Activated CD4-positive, alpha-beta T cell treated with anti-CD3 and anti-CD28 coated beads for 36 hours (primary cell): ENCODE measurements at regions of chr16 and their contacts with region 1.

Region 1: GRCh38 chr16:48632137-48632774 is 22.3 kb upstream of the N4BP1 start:
- DNase-seq: no peak
- ATAC-seq: no peak
- H3K4me3 Mint-ChIP-seq: no peak overlapping the region
- H3K27ac Mint-ChIP-seq: no peak overlapping the region
- H3K4me1 Mint-ChIP-seq: peaks cover 8% of the 10 kb centered on the region
- H3K27me3 Mint-ChIP-seq: peaks cover 2% of the 10 kb centered on the region

Region 2: GRCh38 chr16:48231727-48232492 is 400.3 kb before region 1 on chr16:
- CTCF ChIA-PET with region 1: interaction called, 10 read pairs
- POLR2A ChIA-PET with region 1: no interaction called
- intact Hi-C with region 1: loop called (anchors 1 to 5 kb)
- DNase-seq: peak; percentile 72
- ATAC-seq: peak; percentile 83
- H3K4me3 Mint-ChIP-seq: peak overlapping the region; percentile 20
- H3K27ac Mint-ChIP-seq: peak overlapping the region; percentile 65
- H3K4me1 Mint-ChIP-seq: peaks cover 22% of the 10 kb centered on the region
- H3K27me3 Mint-ChIP-seq: peaks cover 5% of the 10 kb centered on the region

Region 3: DNA sequence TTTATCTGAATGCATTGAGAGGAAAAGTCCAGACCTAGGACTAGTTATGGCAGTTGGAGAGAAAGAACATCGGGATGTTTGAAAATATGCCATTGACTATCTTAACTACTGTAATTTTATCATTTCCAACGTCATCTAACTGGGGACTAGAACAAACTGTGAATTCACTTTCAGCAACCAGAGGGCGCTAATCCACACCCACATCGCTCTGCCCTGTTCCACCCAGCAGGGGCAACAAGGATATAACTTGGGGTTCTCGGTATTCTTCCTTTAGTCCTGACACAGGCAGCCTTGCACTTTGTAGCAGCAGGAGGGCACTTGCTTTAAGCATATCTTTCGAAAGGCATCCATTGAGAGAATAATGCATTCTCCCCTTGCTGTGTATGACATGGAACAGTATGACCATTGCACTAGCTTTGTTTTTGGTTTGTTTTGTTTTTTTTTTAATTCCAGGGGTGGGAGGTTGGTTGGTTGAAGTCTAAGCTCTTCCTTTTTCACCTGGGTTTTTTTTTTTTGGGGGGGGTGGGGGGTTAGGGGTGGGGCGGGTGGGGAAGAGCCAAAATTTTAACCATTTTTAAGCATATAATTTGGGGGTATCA is 278.6 kb before region 1 on chr16:
- CTCF ChIA-PET with region 1: interaction called, 45 read pairs
- POLR2A ChIA-PET with region 1: interaction called, 4 read pairs
- intact Hi-C with region 1: loop called (anchors 1 kb)
- DNase-seq: peak; percentile 78
- ATAC-seq: peak; percentile 83
- H3K4me3 Mint-ChIP-seq: no peak overlapping the region
- H3K27ac Mint-ChIP-seq: peak overlapping the region; percentile 51
- H3K4me1 Mint-ChIP-seq: peaks cover 25% of the 10 kb centered on the region
- H3K27me3 Mint-ChIP-seq: no peaks in the 10 kb centered on the region

Region 4: DNA sequence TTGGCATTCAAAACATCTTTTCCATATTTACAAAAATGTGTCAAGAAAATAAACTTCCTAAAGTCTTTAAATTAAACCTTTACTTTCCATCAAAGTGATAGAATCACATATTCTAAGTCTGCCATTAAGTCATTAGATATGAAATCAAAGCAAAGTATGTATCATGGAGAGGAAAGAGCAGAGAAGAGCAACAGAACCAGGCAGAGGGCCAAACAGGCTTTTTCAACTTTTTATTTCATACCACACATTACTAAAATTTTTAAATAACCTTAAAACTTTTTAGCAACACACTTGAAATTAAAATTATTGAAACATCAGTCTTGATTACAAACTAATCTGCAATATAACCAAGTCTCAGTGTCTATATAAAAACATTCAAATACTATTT is 260.9 kb before region 1 on chr16:
- CTCF ChIA-PET with region 1: interaction called, 13 read pairs
- POLR2A ChIA-PET with region 1: no interaction called
- intact Hi-C with region 1: loop called in 1 of 2 experiments (anchors 1 kb)
- DNase-seq: no peak
- ATAC-seq: no peak
- H3K4me3 Mint-ChIP-seq: no peak overlapping the region
- H3K27ac Mint-ChIP-seq: no peak overlapping the region
- H3K4me1 Mint-ChIP-seq: peaks cover 35% of the 10 kb centered on the region
- H3K27me3 Mint-ChIP-seq: no peaks in the 10 kb centered on the region

Region 5: GRCh38 chr16:48452977-48453760 is 179.1 kb before region 1 on chr16:
- CTCF ChIA-PET with region 1: interaction called, 8 read pairs
- POLR2A ChIA-PET with region 1: no interaction called
- intact Hi-C with region 1: loop called (anchors 1 to 5 kb)
- DNase-seq: no peak
- ATAC-seq: no peak
- H3K4me3 Mint-ChIP-seq: no peak overlapping the region
- H3K27ac Mint-ChIP-seq: no peak overlapping the region
- H3K4me1 Mint-ChIP-seq: peaks cover 2% of the 10 kb centered on the region
- H3K27me3 Mint-ChIP-seq: peaks cover 16% of the 10 kb centered on the region

Region 6: GRCh38 chr16:48526058-48526957 is 105.9 kb before region 1 on chr16:
- CTCF ChIA-PET with region 1: interaction called, 10 read pairs
- POLR2A ChIA-PET with region 1: no interaction called
- intact Hi-C with region 1: no loop called
- DNase-seq: peak; percentile 71
- ATAC-seq: peak; percentile 90
- H3K4me3 Mint-ChIP-seq: no peak overlapping the region
- H3K27ac Mint-ChIP-seq: no peak overlapping the region
- H3K4me1 Mint-ChIP-seq: no peaks in the 10 kb centered on the region
- H3K27me3 Mint-ChIP-seq: no peaks in the 10 kb centered on the region

Region 7: GRCh38 chr16:48745541-48745940 is 113.3 kb after region 1 on chr16:
- CTCF ChIA-PET with region 1: no interaction called
- POLR2A ChIA-PET with region 1: no interaction called
- intact Hi-C with region 1: no loop called
- DNase-seq: no peak
- ATAC-seq: no peak
- H3K4me3 Mint-ChIP-seq: no peak overlapping the region
- H3K27ac Mint-ChIP-seq: no peak overlapping the region
- H3K4me1 Mint-ChIP-seq: no peaks in the 10 kb centered on the region
- H3K27me3 Mint-ChIP-seq: peaks cover 4% of the 10 kb centered on the region

Region 8: GRCh38 chr16:48852951-48853350 is 220.7 kb after region 1 on chr16:
- CTCF ChIA-PET with region 1: no interaction called
- POLR2A ChIA-PET with region 1: no interaction called
- intact Hi-C with region 1: no loop called
- DNase-seq: no peak
- ATAC-seq: no peak
- H3K4me3 Mint-ChIP-seq: no peak overlapping the region
- H3K27ac Mint-ChIP-seq: no peak overlapping the region
- H3K4me1 Mint-ChIP-seq: no peaks in the 10 kb centered on the region
- H3K27me3 Mint-ChIP-seq: no peaks in the 10 kb centered on the region

Region 9: DNA sequence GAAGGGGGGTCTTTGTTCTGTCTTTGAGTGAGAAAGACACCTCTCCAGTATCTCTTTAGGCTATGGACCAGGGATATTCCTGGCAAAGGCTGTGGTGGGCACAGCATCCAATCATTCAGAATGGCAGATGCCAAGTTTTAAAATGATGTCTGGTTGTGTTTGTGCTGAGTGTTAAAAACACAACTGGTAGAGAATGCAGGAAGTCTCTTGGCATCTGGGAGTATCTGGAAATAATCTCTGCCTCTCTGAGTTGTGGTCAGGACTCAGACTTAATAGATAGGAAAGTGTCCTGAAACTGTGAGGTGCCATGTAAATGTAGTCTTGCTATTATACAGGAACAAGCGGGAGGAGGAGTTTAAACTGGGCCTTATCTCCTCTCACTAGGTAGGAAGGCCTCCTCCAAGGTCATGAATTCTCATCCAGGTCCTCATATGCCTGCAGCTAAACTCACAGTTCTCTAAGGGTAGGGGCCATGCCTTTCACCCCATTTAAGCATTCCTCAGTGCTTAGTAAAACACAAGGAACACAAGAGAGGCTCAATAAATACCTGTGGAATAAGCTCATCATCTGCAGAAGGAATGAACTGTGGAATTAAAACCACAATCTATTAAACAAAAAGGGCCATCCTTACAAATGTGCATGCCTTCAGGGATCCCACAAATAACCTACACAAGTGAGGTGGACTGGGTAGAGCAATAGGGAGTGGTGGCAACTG is 331.8 kb after region 1 on chr16:
- CTCF ChIA-PET with region 1: no interaction called
- POLR2A ChIA-PET with region 1: no interaction called
- intact Hi-C with region 1: no loop called
- DNase-seq: no peak
- ATAC-seq: no peak
- H3K4me3 Mint-ChIP-seq: no peak overlapping the region
- H3K27ac Mint-ChIP-seq: no peak overlapping the region
- H3K4me1 Mint-ChIP-seq: no peaks in the 10 kb centered on the region
- H3K27me3 Mint-ChIP-seq: no peaks in the 10 kb centered on the region